ENCODE measurements at regions of chr12 and their contacts with region 1.

Region 1: DNA sequence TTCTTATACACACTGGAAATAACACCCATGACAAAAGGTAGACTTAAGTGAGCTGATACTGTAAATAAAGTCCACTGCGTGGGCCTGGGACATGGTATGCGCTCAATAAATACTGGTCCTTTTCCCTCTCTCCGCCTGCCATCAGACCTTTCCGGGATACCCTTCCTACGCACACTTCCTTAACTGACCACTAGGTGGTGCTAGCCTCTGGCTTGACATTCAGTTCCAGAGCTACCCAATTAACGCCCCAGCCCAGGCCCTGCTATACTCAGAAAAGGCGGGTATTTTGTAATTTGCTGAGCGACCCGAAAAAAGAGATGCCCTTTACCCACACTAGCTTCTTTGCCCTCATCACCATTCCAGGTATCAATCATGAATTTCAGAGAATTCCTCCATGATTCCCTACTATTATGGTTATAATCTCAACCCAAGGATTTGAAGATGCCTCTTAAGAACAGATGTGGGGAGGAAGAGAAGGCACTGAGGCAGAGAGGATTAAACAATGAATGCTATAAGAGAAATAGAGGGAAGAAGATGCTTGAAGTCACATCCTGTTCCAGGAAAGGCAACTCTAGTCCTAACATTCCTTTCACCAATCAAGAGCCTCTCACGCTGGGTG is 3.9 kb upstream of the LRP1 start:
- DNase-seq: no peak
- H3K4me3 ChIP-seq: no peak overlapping the region
- CTCF ChIP-seq: peak; percentile 88

Region 2: DNA sequence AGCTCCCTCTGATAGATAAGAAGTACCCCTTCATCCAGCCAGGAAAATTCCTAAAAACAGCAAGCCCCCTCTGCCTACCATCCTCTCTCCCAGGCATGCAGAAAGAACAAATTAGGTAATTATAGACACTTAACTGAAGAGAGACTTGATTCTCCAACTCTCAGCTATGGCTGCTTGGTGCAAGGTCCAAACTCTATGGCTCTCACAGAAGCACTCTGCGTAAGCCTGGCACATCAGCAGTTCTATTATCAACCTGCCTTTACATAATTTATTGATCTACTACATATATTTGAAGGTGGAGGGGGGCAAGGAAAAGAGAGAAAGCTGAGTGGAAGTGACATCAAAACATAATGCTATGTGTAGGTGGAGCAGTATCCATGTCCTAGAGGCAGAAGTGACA is 73.4 kb before region 1 on chr12:
- CTCF ChIA-PET with region 1: no interaction called
- POLR2A ChIA-PET with region 1: no interaction called
- DNase-seq: no peak
- H3K4me3 ChIP-seq: no peak overlapping the region
- CTCF ChIP-seq: no peak

Region 3: DNA sequence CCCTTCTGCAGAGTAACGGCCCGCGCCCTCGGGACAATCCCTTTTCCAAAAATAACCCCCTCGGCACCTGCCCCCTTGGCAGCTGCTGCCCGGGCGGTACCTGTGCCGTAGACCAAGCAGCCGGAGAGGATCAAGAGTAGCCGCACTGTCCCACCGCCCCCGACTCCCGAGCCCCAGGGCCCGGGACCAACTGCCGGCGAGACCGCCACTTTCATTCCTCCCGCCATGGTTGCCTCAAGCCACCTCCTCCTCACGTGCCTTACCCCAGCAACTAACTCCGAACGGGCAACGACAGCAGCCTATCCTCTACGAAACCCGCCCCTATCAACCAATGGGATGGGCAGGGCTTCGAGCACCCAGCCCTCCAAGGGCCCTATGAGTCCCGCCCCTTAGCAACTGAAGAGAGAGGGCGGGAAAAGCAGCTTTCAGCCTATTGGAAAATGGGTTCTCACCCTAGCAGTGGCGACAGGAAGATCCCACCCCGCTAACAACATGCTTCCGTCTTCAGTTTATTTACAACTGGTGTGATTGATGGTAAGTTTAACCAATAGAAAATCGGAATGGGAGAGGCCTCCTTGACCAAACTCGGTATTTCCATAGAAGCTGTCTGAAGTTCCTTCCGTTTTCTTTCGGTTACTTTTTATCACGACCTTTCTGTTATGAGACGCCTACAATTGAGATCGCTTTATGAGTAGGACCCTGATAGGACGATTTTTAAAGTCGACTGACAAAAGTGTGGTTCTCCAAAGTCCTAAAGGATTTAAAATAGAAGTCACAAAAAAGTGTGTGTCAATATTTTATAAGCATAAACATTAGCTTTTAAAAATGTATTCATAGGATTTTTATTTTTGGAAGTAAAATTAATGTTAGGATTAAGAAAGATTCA is 45.6 kb before region 1 on chr12 and contains the start of gene NEMP1:
- CTCF ChIA-PET with region 1: interaction called, 148 read pairs
- POLR2A ChIA-PET with region 1: interaction called, 5 read pairs
- DNase-seq: peak; percentile 100
- H3K4me3 ChIP-seq: peak within 1 kb of the TSS; percentile 77
- CTCF ChIP-seq: no peak

Region 4: DNA sequence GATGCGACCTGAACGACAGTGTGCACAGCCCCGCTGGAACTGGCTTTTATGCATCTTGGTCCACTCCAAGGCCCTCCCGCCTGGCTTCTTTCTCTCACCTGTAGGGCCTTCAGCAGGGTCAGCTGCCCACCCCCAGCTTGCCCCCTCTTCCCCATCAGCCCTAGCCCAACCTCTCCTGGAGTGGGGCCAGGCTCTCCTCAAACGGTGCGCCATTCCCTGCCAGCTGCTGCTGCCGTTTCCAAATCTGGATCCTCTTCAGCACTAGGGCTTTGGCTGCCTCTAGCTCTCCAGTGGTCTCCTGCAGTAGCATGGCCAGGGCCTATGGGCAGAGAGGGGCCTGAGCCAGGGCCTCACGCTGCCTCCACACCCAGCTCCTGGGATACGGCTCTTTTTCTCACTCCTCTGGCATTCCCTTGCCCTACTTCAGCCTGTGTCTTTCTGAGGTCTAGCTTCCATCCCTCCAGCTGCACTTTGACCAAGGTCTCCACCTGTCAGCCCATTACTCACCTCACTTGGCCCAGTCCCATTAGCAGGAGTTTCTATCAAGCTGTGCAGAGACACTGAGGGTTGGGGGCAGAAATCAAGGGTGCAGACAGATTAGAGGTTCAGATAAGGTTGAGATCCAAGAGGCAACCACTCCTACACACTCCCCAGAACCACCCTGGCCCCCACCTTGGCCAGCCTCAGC is 18.2 kb before region 1 on chr12:
- CTCF ChIA-PET with region 1: interaction called, 160 read pairs
- POLR2A ChIA-PET with region 1: interaction called, 23 read pairs
- DNase-seq: no peak
- H3K4me3 ChIP-seq: no peak overlapping the region
- CTCF ChIP-seq: no peak

Region 5: GRCh38 chr12:57151741-57152630 is 27.6 kb after region 1 on chr12:
- CTCF ChIA-PET with region 1: interaction called, 67 read pairs
- POLR2A ChIA-PET with region 1: interaction called, 9 read pairs
- DNase-seq: no peak
- H3K4me3 ChIP-seq: peak overlapping the region; percentile 6; the same call in 1 of the 2 replicates
- CTCF ChIP-seq: no peak

Region 6: GRCh38 chr12:57182921-57183790 is 58.8 kb after region 1 on chr12:
- CTCF ChIA-PET with region 1: interaction called, 874 read pairs
- POLR2A ChIA-PET with region 1: interaction called, 4 read pairs
- DNase-seq: no peak
- H3K4me3 ChIP-seq: no peak overlapping the region
- CTCF ChIP-seq: peak; percentile 92

Region 7: DNA sequence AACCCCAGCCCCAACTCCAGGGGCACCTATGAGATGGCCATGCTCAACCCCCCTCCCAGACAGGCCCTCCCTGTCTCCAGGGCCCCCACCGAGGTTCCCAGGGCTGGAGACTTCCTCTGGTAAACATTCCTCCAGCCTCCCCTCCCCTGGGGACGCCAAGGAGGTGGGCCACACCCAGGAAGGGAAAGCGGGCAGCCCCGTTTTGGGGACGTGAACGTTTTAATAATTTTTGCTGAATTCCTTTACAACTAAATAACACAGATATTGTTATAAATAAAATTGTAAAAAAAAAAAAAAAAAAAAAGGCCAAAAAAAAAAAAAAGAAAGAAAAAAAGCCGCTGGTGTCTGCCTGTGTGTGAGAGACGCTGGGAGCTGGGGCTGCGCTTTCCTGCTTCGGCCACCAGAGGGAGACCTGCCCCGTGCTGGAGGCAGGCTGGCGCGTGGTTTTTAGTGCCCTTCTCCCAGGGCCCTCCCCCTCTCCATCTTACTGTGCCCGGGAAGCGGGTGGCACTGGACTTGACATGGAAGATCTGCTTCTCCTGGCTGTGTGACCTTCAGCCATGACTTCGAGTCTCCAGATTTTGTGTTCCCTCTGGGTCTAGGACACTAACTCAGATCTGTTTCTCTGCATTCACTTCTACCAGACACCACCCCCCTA is 88.8 kb after region 1 on chr12:
- CTCF ChIA-PET with region 1: interaction called, 19 read pairs
- POLR2A ChIA-PET with region 1: interaction called, 3 read pairs
- DNase-seq: no peak
- H3K4me3 ChIP-seq: no peak overlapping the region
- CTCF ChIP-seq: peak; percentile 89

Region 8: DNA sequence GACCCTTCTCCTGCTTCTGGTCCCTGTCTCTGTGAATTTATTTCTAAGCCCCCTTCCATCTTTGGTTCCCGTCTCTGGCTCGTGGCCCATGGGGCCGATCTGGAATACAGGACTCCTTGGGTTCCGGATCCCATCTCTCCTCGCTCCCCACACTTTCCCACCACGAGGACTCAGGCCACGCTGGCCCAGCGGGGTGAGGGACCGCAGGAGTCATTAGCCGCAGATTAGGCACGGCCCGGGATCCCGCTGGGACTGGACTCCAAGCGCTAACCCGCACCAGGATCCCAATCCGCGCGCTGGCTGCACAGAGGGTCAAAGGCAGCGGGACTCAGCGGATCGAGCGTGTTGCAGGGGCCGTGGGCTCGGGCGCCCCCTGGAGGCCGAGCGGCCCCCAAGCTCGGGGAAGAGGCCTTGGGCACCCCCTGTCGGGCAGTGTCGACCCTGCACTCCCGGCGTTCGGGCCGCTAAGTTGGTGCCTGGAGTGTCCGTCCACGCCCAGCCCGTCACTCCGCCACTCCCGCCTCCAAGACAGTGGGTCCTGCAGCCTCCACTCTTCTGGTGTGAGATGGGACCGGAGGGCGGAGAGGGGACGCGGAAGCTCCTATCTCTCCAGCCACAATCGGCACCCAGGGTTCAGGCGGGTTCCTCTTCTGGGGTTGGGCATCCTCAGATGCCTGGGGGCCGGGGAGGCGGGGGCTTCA is 114.6 kb after region 1 on chr12:
- CTCF ChIA-PET with region 1: interaction called, 19 read pairs
- POLR2A ChIA-PET with region 1: interaction called, 4 read pairs
- DNase-seq: no peak
- H3K4me3 ChIP-seq: peak overlapping the region; percentile 69
- CTCF ChIP-seq: peak; percentile 100

Measured in AG04449 (cell line).